Left ventricle myocardium superior (tissue), 1 donor: ENCODE measurements at regions of chr6 and their contacts with region 1.

Region 1: GRCh38 chr6:35342258-35343091 is at the start of gene PPARD:
- DNase-seq: peak; percentile 99
- ATAC-seq: peak; percentile 100
- total RNA-seq, gene PPARD: 15.1 TPM

Region 2: DNA sequence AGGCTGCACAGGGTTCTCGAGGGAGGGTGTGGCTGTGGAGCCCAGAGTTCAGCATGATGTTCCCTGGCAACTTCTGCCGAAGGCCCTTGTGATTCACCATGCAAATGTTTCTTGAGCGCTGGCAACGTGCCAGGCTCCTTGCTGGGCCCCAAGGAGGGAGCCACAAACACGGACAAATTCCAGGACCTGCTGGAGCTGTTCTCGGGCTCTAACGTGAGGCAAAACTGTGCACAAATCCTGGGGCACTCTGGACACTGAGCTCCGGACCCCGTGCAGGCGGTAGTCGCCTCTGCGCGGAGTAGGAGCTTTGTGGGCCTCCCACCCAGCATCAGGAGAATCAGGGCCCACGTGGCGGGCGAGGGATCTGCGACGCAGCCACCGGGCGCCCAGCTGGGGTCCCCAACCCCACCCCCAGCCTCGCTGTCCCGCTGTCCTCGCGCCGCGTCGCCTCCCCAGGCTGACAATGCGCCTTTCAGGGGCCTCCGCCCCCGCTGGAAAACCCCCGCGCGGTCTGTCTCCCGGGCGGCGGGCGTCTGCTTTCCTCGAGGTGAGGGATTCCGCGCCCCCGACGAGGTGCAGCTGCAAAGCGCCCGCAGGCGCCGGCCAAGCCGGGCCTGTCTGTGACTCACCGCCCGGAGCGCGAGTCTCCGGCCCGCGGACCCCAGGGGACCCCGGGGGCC is 160.4 kb before region 1 on chr6:
- intact Hi-C with region 1: no loop called
- DNase-seq: peak; percentile 72
- ATAC-seq: peak; percentile 52

Region 3: DNA sequence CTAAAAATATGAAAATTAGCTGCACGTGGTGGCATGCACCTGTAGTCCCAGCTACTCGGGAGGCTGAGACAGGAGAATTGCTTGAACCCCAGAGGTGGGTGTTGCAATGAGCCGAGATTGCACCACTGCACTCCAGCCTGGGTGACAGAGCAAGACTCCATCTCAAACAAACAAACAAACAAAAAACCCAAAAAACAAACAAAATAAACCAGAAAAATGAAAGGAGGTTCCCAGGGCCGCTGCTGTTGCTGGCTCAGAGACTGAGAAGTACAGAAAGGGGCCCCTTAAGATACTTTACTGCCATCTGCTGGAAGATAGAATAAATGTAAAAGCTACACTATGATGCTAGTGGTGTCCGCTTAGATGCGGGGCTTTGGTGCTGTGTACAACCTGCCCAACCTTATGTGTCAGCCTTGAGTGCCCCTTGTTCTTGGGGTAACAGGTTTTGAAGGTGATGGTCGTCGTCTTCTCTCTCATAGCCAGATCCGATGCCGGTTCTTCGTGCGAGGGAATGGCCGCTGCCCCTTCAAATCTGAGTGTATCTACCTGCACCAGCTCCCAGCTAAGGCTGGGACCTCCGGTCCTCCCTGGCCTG is 106.9 kb after region 1 on chr6:
- intact Hi-C with region 1: loop called (anchors 5 kb)
- DNase-seq: no peak
- ATAC-seq: peak; percentile 54